Adrenal gland (tissue), 19 donors: ENCODE measurements at regions of chr3 and their contacts with region 1.

Region 1: GRCh38 chr3:157201648-157202278 is 41.8 kb upstream of the CCNL1 start:
- DNase-seq: no peak
- H3K4me3 ChIP-seq: no peak overlapping the region
- H3K27ac ChIP-seq: no peak overlapping the region
- H3K4me1 ChIP-seq: no peaks in the 10 kb centered on the region
- H3K27me3 ChIP-seq: no peaks in the 10 kb centered on the region
- CTCF ChIP-seq: peak; percentile 40 to 65 (median 60)
- POLR2A ChIP-seq: no peak

Region 2: GRCh38 chr3:157493627-157494550 is 292.1 kb after region 1 on chr3:
- intact Hi-C with region 1: loop called (anchors 2 to 10 kb)
- DNase-seq: no peak
- H3K4me3 ChIP-seq: no peak overlapping the region
- H3K27ac ChIP-seq: peak overlapping the region in 2 of 5 donors; percentile 53 to 65
- H3K4me1 ChIP-seq: peaks cover 5 to 14% of the 10 kb centered on the region in 2 donors
- H3K27me3 ChIP-seq: no peaks in the 10 kb centered on the region
- CTCF ChIP-seq: peak; percentile 52 to 76 (median 72)
- POLR2A ChIP-seq: no peak

Region 3: GRCh38 chr3:157669416-157669815 is 467.7 kb after region 1 on chr3:
- intact Hi-C with region 1: no loop called
- DNase-seq: no peak
- H3K4me3 ChIP-seq: no peak overlapping the region
- H3K27ac ChIP-seq: no peak overlapping the region
- H3K4me1 ChIP-seq: no peaks in the 10 kb centered on the region
- H3K27me3 ChIP-seq: no peaks in the 10 kb centered on the region
- CTCF ChIP-seq: no peak
- POLR2A ChIP-seq: no peak